Dendritic cell treated with granulocyte-macrophage colony-stimulating factor and Interleukin-4, amounts not matched to agents 40 ng/mL and 50 ng/mL, for 4 days (primary cell): ENCODE measurements at regions of chr4 and their contacts with region 1.

Region 1: GRCh38 chr4:181830404-181831035 is 412.7 kb upstream of the TENM3 start:
- H3K4me3 Mint-ChIP-seq: no peak overlapping the region
- H3K27ac Mint-ChIP-seq: no peak overlapping the region
- H3K4me1 Mint-ChIP-seq: no peaks in the 10 kb centered on the region
- H3K27me3 Mint-ChIP-seq: no peaks in the 10 kb centered on the region

Region 2: DNA sequence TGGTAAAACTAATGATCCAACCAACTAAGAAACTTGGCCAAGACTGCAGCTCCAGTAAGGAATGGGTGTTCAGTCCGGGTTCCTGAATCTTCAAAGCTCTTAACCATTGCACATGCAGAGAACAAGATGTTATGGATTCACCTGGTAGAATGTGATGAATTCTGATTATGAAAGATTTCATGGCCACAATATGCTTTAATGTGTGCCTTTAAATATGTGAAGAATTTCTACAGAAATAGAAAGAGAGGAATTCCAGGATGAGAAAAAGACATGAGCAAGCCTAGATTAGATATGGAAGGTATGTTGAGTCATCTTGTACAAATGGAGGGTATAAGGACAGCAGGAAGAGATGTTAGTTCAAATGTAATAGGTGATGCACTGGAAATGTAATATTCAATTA is 59.5 kb before region 1 on chr4:
- intact Hi-C with region 1: no loop called
- H3K4me3 Mint-ChIP-seq: no peak overlapping the region
- H3K27ac Mint-ChIP-seq: no peak overlapping the region
- H3K4me1 Mint-ChIP-seq: no peaks in the 10 kb centered on the region
- H3K27me3 Mint-ChIP-seq: no peaks in the 10 kb centered on the region

Region 3: GRCh38 chr4:181810711-181811110 is 19.8 kb before region 1 on chr4:
- intact Hi-C with region 1: loop called (anchors 1 kb)
- H3K4me3 Mint-ChIP-seq: no peak overlapping the region
- H3K27ac Mint-ChIP-seq: no peak overlapping the region
- H3K4me1 Mint-ChIP-seq: no peaks in the 10 kb centered on the region
- H3K27me3 Mint-ChIP-seq: no peaks in the 10 kb centered on the region

Region 4: DNA sequence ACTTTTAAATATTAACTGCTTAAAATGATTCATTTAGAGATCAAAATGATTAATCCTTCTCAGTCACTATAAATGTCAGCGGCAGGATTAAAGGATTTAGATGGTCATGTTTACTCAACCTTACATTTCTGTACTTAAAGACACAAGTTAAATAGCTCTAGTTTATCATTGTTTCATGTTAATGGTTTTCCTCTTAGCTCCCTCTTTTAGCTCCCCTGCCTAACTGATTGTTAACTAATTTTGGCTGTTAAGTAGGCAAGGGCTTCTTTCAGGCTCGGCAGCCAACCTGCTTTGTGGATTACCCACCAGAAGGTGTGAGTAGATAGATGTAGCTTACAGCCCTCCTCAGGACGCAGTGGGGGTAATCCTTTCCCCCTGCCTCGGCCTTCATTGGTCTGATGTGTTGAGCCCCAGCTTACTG is 508.7 kb after region 1 on chr4:
- intact Hi-C with region 1: no loop called
- H3K4me3 Mint-ChIP-seq: no peak overlapping the region
- H3K27ac Mint-ChIP-seq: no peak overlapping the region
- H3K4me1 Mint-ChIP-seq: no peaks in the 10 kb centered on the region
- H3K27me3 Mint-ChIP-seq: no peaks in the 10 kb centered on the region